A549 (cell line): ENCODE measurements at regions of chr17 and their contacts with region 1.

Region 1: GRCh38 chr17:75012346-75013091 is at the start of gene MRPL58:
- DNase-seq: peak; percentile 94 to 95
- ATAC-seq: peak; percentile 92 to 96
- H3K4me3 ChIP-seq: peak within 1 kb of the TSS; percentile 76
- H3K27ac ChIP-seq: peak within 1 kb of the TSS; percentile 85 to 92
- H3K4me1 ChIP-seq: peaks cover 18% of the 10 kb centered on the region
- CTCF ChIP-seq: peak; percentile 36; the same call in 2 of the 3 replicates
- EP300 ChIP-seq: no peak
- POLR2A ChIP-seq: peak; percentile 79
- RAD21 ChIP-seq: peak; percentile 37 to 48; a peak in 4 of 5 replicates
- polyA plus RNA-seq, gene MRPL58: 86.4 and 127 TPM in 2 replicates

Region 2: DNA sequence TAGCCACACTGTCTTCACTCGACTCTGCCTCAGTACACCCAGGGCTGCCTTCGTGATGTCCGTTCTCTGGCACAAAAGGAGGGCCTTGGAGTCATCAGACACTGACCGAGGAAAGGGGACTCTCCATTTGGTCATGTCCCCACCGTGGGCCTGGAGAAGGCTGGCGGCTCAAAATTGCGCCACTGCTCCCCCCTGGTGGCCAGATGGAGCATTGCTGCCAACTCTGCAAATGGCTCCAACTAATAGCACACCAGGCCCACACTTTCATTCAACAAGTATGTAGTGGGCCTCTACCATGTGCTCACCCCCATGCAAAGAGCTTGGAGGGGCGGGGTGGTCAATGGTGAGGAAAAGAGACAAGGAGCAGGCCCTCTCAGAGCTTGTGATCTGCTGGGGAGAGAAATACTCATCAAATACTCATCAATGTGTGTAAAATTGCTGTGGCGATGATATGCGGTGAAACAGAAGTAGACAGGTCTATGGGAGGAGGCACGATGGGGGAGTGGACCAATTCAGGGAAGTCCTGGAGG is 147.6 kb before region 1 on chr17:
- CTCF ChIA-PET with region 1: interaction called, 10 read pairs
- POLR2A ChIA-PET with region 1: no interaction called
- DNase-seq: peak; percentile 78 to 85
- ATAC-seq: peak; percentile 49 to 74
- H3K4me3 ChIP-seq: no peak overlapping the region
- H3K27ac ChIP-seq: no peak overlapping the region
- H3K4me1 ChIP-seq: peaks cover 38% of the 10 kb centered on the region
- CTCF ChIP-seq: peak; percentile 77
- EP300 ChIP-seq: no peak
- POLR2A ChIP-seq: no peak
- RAD21 ChIP-seq: peak; percentile 76 to 85

Region 3: DNA sequence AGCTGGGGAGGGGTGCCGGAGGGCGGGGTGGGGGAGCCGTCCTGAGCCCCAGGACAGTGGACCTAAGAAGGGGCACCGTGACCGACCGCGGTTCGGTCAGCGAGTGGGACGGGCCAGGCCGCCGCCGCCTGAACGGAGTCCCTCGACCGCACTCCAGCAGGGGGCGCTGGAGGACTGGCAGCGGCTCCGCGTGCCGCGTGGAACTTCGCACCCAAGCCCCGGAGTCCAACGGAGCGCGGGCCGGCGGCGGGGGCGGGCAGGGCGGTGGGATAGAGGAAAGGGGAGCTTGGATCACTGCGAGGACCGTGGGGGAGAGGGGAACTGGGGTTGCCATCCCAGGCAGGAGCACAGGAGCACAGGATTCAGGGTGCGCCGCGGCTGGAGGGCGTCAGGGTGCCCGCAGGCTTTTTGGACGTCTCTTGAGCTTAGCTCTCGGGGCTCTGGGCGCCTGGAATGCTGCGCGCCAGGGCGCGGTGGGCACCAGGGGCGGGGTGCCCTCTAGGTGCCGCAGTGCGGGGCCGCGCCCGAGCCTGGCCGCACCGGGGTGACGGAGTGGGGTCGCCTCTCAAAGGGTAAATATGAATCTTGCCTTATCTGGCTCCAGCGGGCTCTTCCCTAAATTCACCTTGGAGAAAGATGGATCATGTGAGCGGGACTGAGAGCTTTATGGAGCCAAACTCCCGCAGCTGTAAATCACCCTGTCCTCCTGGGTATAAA is 88.8 kb before region 1 on chr17:
- CTCF ChIA-PET with region 1: interaction called, 26 read pairs
- POLR2A ChIA-PET with region 1: interaction called, 4 read pairs
- DNase-seq: peak; percentile 64 to 92
- ATAC-seq: peak; percentile 49 to 80
- H3K4me3 ChIP-seq: peak overlapping the region; percentile 46
- H3K27ac ChIP-seq: peak overlapping the region; percentile 42 to 70; a peak in 5 of 6 replicates
- H3K4me1 ChIP-seq: peaks cover 19% of the 10 kb centered on the region; the same call in 2 of the 3 replicates
- CTCF ChIP-seq: peak; percentile 98
- EP300 ChIP-seq: no peak
- POLR2A ChIP-seq: no peak
- RAD21 ChIP-seq: peak; percentile 88 to 97

Region 4: GRCh38 chr17:74981979-74982662 is 30.4 kb before region 1 on chr17:
- CTCF ChIA-PET with region 1: interaction called, 404 read pairs
- POLR2A ChIA-PET with region 1: interaction called, 107 read pairs
- DNase-seq: peak; percentile 76 to 90
- ATAC-seq: peak; percentile 94
- H3K4me3 ChIP-seq: peak overlapping the region; percentile 69
- H3K27ac ChIP-seq: peak overlapping the region; percentile 92 to 94
- H3K4me1 ChIP-seq: peaks cover 23% of the 10 kb centered on the region
- CTCF ChIP-seq: peak; percentile 11; the same call in 1 of the 3 replicates
- EP300 ChIP-seq: no peak
- POLR2A ChIP-seq: peak; percentile 94
- RAD21 ChIP-seq: peak in 1 of 2 experiments; percentile 33; a peak in 1 of 5 replicates

Region 5: GRCh38 chr17:75024686-75025397 is 12.3 kb after region 1 on chr17:
- CTCF ChIA-PET with region 1: interaction called, 56 read pairs
- POLR2A ChIA-PET with region 1: interaction called, 19 read pairs
- DNase-seq: no peak
- ATAC-seq: peak in 1 of 2 experiments; percentile 67; a peak in 3 of 6 replicates
- H3K4me3 ChIP-seq: no peak overlapping the region
- H3K27ac ChIP-seq: no peak overlapping the region
- H3K4me1 ChIP-seq: no peaks in the 10 kb centered on the region
- CTCF ChIP-seq: no peak
- EP300 ChIP-seq: no peak
- POLR2A ChIP-seq: no peak
- RAD21 ChIP-seq: no peak

Region 6: GRCh38 chr17:75046582-75047289 is 34.2 kb after region 1 on chr17 and contains the starts of genes ATP5PD and KCTD2:
- CTCF ChIA-PET with region 1: interaction called, 10 read pairs
- POLR2A ChIA-PET with region 1: interaction called, 13 read pairs
- DNase-seq: peak; percentile 98 to 99
- ATAC-seq: peak; percentile 98 to 99
- H3K4me3 ChIP-seq: peak within 1 kb of the TSS; percentile 94
- H3K27ac ChIP-seq: peak within 1 kb of the TSS; percentile 93 to 97
- H3K4me1 ChIP-seq: peaks cover 16% of the 10 kb centered on the region
- CTCF ChIP-seq: no peak
- EP300 ChIP-seq: no peak
- POLR2A ChIP-seq: peak; percentile 90
- RAD21 ChIP-seq: 0 out of 5 replicates have a peak, but pooled peaks of 1 of the 2 experiments have one; percentile 21
- polyA plus RNA-seq, gene ATP5PD: 314 and 333 TPM in 2 replicates
- polyA plus RNA-seq, gene KCTD2: 31.3 and 34.1 TPM in 2 replicates

Region 7: GRCh38 chr17:75124041-75124818 is 111.7 kb after region 1 on chr17:
- CTCF ChIA-PET with region 1: no interaction called
- POLR2A ChIA-PET with region 1: no interaction called
- DNase-seq: peak; percentile 99 to 100
- ATAC-seq: peak; percentile 93
- H3K4me3 ChIP-seq: peak overlapping the region; percentile 31
- H3K27ac ChIP-seq: peak overlapping the region; percentile 92 to 97
- H3K4me1 ChIP-seq: peaks cover 61% of the 10 kb centered on the region
- CTCF ChIP-seq: no peak; the same call in 2 of the 3 replicates
- EP300 ChIP-seq: peak; percentile 30 to 80; a peak in 3 of 5 replicates
- POLR2A ChIP-seq: peak; percentile 62
- RAD21 ChIP-seq: peak; percentile 30 to 39; a peak in 4 of 5 replicates